ENCODE measurements at regions of chr7 and their contacts with region 1.

Region 1: GRCh38 chr7:5450549-5451372 is 27.1 kb upstream of the TNRC18 start:
- DNase-seq: peak; percentile 58
- ATAC-seq: peak; percentile 76

Region 2: GRCh38 chr7:5231811-5232484 is 218.8 kb before region 1 on chr7:
- intact Hi-C with region 1: loop called in 1 of 2 experiments (anchors 10 kb)
- DNase-seq: no peak
- ATAC-seq: peak in 1 of 2 donors; percentile 11

Region 3: GRCh38 chr7:5243261-5243660 is 207.5 kb before region 1 on chr7:
- intact Hi-C with region 1: loop called (anchors 5 to 10 kb)
- DNase-seq: no peak
- ATAC-seq: no peak

Region 4: DNA sequence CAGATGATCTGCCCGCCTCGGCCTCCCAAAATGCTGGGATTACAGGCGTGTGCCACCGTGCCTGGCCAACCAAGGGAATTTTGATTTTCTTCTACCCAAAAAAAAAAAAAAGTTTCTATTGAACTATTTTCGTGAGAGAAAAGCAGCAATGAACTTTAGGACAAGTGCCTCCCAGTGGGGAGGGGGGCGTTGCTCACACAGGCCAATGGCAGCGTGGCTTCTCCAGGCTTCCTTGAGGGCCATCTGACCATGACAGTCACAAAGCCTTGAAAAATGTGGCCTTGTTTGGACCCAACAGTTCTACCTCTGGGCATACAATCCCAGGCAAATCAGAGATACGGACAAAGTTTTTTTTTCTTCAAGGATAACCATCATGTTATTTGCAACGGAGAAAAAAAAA is 83.1 kb before region 1 on chr7:
- intact Hi-C with region 1: loop called in 1 of 2 experiments (anchors 2 kb)
- DNase-seq: no peak
- ATAC-seq: no peak